IMR-90 (cell line): ENCODE measurements at regions of chr7 and their contacts with region 1.

Region 1: GRCh38 chr7:38630720-38631673 is at the start of gene AMPH:
- DNase-seq: peak; percentile 40
- ATAC-seq: peak; percentile 92
- H3K4me3 ChIP-seq: peak within 1 kb of the TSS; percentile 73
- H3K27ac ChIP-seq: no peak within 1 kb of the TSS; the same call in 1 of the 2 replicates
- H3K4me1 ChIP-seq: peaks cover 7% of the 10 kb centered on the region; the same call in 1 of the 2 replicates
- H3K27me3 ChIP-seq: peaks cover 3% of the 10 kb centered on the region; the same call in 1 of the 2 replicates
- CTCF ChIP-seq: no peak
- POLR2A ChIP-seq: no peak
- RAD21 ChIP-seq: no peak
- total RNA-seq, gene AMPH: 3.9 and 4.2 TPM in 2 replicates

Region 2: DNA sequence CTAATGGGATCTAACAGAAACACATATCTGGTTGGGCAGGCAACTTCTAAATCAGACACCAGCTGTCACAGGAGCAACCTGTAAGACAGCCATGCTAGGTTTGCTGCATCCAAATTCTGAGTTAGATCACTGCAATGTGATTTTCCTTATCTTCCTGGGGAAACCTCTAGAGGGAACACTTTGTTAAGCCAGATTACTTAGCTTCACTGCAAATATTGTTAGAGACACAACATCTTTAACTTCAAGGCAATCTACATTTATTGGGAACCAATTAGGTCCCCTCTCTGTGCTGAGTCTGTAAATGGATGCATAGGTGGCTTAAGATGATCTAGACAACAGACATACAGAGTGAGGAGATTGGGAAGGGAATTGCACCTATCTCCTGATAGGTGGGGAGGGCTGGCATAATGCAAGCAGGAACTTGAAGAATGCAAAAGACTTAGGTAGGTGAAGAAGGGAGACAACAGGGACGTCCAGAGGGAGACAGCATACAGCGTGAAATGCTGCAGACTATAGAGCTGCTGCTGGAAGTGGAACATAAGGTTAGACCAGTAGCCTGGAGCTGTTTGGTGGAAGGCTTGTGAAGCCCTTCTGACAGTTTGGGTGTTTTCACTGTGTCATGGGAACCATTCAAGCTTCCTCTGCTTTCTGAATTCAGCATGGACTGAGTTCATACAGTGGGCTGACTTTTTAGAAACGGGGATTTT is 1072.5 kb before region 1 on chr7:
- CTCF ChIA-PET with region 1: no interaction called
- POLR2A ChIA-PET with region 1: no interaction called
- dilution Hi-C with region 1: no loop called
- in situ Hi-C with region 1: no loop called
- intact Hi-C with region 1: no loop called
- DNase-seq: no peak
- ATAC-seq: no peak
- H3K4me3 ChIP-seq: no peak overlapping the region
- H3K27ac ChIP-seq: no peak overlapping the region
- H3K4me1 ChIP-seq: no peaks in the 10 kb centered on the region
- H3K27me3 ChIP-seq: no peaks in the 10 kb centered on the region
- CTCF ChIP-seq: no peak
- POLR2A ChIP-seq: no peak
- RAD21 ChIP-seq: no peak

Region 3: DNA sequence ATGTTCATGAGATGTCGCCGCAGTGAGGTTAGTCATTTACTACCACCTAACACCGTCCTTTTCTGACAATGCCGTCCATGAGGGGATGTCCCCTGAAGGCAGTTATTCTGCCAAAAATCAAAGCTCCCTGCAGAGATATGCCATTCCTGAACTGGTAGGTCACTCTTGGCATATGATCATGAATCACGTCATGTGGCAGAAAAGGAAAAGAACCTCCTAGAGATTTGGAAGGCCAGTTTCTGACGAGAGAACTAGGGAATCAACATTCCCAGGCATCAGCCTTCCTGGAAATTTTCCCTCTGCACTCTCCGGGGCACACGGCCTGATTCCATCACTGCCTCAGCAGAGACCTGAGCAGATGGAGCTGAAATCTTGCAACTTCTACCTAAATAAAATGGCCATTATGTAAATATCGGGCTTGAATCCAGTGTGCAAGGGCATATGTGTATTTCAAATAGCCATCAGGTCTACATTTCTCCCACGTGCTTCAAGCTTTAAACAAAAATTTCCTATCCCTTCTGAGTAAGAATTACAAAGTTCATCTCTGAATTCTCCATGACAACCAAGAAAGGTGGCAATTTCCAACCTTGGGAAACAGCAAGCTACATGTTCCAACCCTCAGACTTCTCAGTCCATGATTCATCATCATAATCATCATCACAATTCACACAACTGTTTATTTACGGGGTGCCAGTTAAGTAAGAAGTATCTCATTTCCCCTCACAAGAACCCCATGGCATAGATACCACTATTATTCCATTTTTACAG is 46.4 kb before region 1 on chr7:
- CTCF ChIA-PET with region 1: interaction called, 3 read pairs
- POLR2A ChIA-PET with region 1: no interaction called
- dilution Hi-C with region 1: no loop called
- in situ Hi-C with region 1: no loop called
- intact Hi-C with region 1: loop called (anchors 1 kb)
- DNase-seq: peak; percentile 71
- ATAC-seq: peak; percentile 32; the same call in 1 of the 2 replicates
- H3K4me3 ChIP-seq: no peak overlapping the region
- H3K27ac ChIP-seq: no peak overlapping the region
- H3K4me1 ChIP-seq: peaks cover 2% of the 10 kb centered on the region; the same call in 1 of the 2 replicates
- H3K27me3 ChIP-seq: no peaks in the 10 kb centered on the region
- CTCF ChIP-seq: no peak
- POLR2A ChIP-seq: no peak
- RAD21 ChIP-seq: no peak